Endothelial cell of umbilical vein (primary cell): ENCODE measurements at regions of chr20 and their contacts with region 1.

Region 1: DNA sequence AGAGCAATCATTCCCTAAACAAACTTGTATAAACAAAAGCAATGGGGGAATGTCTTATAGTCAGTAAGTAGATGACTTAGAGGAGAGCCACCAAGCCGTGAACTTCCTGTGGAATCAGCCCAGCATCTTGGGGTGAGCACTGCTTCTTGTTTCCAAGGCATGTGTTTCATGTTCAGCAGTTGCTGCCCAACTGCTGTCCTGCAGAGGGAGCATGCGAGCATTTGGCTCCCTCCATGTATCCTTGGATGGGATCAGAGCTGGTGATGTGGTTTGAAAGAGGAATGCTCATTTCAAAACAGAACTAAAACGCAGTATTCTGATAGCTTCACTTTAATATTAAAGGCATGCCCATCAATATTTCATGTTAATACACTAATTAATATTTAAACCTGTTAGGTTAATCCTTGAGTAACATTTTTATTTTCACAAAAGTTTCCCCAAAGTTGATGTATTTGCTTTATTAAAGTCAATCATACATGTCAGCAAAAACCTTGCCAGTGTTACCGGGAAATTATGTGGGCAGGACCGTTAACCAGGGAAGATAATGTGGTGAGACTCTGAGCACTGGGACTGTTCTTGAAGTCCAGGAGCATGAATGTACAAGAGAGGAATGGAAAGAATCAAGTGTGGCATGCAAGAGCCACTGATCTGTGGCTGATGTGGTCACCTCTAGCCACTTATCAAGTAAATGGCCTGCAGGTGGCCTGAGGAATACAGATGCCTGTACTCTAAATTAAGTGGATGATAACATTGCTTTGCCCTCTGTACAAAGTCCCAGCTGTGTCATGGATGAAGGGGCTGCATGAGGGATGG is 172.2 kb upstream of the GGTLC1 start:
- DNase-seq: peak; percentile 58
- H3K4me3 ChIP-seq: no peak overlapping the region
- H3K27ac ChIP-seq: no peak overlapping the region
- H3K4me1 ChIP-seq: peaks cover 14% of the 10 kb centered on the region
- H3K27me3 ChIP-seq: peaks cover 2 to 4% of the 10 kb centered on the region in 2 experiments
- CTCF ChIP-seq: peak; percentile 72 to 86
- POLR2A ChIP-seq: no peak

Region 2: GRCh38 chr20:23399568-23400241 is 761.1 kb before region 1 on chr20:
- CTCF ChIA-PET with region 1: no interaction called
- POLR2A ChIA-PET with region 1: no interaction called
- dilution Hi-C with region 1: no loop called
- intact Hi-C with region 1: no loop called
- DNase-seq: no peak
- H3K4me3 ChIP-seq: no peak overlapping the region
- H3K27ac ChIP-seq: no peak overlapping the region
- H3K4me1 ChIP-seq: peaks cover 17% of the 10 kb centered on the region
- H3K27me3 ChIP-seq: no peaks in the 10 kb centered on the region
- CTCF ChIP-seq: no peak
- POLR2A ChIP-seq: no peak

Region 3: GRCh38 chr20:23794841-23795240 is 365.9 kb before region 1 on chr20:
- CTCF ChIA-PET with region 1: no interaction called
- POLR2A ChIA-PET with region 1: no interaction called
- dilution Hi-C with region 1: no loop called
- intact Hi-C with region 1: loop called (anchors 5 kb)
- DNase-seq: no peak
- H3K4me3 ChIP-seq: no peak overlapping the region
- H3K27ac ChIP-seq: no peak overlapping the region
- H3K4me1 ChIP-seq: no peaks in the 10 kb centered on the region
- H3K27me3 ChIP-seq: peaks cover 3 to 5% of the 10 kb centered on the region in 2 experiments
- CTCF ChIP-seq: no peak
- POLR2A ChIP-seq: no peak

Region 4: GRCh38 chr20:23937303-23938117 is 223.3 kb before region 1 on chr20:
- CTCF ChIA-PET with region 1: interaction called, 42 read pairs
- POLR2A ChIA-PET with region 1: no interaction called
- dilution Hi-C with region 1: no loop called
- intact Hi-C with region 1: loop called (anchors 1 kb)
- DNase-seq: peak; percentile 60
- H3K4me3 ChIP-seq: no peak overlapping the region
- H3K27ac ChIP-seq: no peak overlapping the region
- H3K4me1 ChIP-seq: no peaks in the 10 kb centered on the region
- H3K27me3 ChIP-seq: no peaks in the 10 kb centered on the region
- CTCF ChIP-seq: peak; percentile 54 to 73
- POLR2A ChIP-seq: no peak

Region 5: DNA sequence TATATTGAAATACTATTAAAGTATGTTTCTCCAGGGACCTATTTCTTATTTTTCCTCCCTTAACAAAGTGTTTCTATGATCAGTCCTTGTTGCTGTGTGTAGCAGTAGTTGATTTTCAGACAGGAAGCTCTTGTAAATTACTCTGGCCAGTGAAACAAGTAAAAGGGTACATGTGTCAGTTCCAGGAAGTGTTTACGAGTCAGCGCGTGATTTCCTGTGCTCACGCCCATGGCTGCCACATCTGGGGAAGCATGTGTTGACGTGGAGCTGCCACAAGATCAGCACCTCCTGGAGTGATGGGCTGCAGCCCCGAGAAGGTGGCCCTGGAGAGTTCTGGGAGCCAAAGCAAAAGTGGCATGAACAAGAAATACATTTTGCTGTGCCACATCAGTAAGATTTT is 133.5 kb before region 1 on chr20:
- CTCF ChIA-PET with region 1: interaction called, 3 read pairs
- POLR2A ChIA-PET with region 1: no interaction called
- dilution Hi-C with region 1: no loop called
- intact Hi-C with region 1: loop called (anchors 10 kb)
- DNase-seq: peak; percentile 90
- H3K4me3 ChIP-seq: no peak overlapping the region
- H3K27ac ChIP-seq: peak overlapping the region; percentile 85
- H3K4me1 ChIP-seq: peaks cover 14% of the 10 kb centered on the region
- H3K27me3 ChIP-seq: no peaks in the 10 kb centered on the region
- CTCF ChIP-seq: no peak
- POLR2A ChIP-seq: peak; percentile 48

Region 6: DNA sequence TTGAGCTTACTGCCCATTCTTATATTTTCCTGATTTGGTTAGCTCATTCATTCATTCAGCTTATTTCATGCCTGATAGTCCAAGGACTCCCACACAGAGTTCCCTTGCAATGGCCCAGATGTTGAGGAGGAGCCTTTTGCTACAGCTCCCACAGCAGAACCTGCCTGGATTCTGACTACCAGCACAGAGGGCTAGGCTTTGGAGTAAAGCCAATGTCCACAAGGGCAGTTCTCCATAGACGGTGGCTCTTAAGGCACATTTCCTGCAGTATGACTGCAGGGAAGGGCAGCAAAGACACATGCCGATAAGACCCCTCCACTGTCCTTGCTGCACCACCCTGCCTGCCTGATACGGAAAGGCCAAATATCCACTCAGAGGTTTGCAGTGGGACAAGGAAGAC is 196.4 kb after region 1 on chr20:
- CTCF ChIA-PET with region 1: no interaction called
- POLR2A ChIA-PET with region 1: no interaction called
- dilution Hi-C with region 1: no loop called
- intact Hi-C with region 1: no loop called
- DNase-seq: no peak
- H3K4me3 ChIP-seq: no peak overlapping the region
- H3K27ac ChIP-seq: no peak overlapping the region
- H3K4me1 ChIP-seq: no peaks in the 10 kb centered on the region
- H3K27me3 ChIP-seq: no peaks in the 10 kb centered on the region
- CTCF ChIP-seq: no peak
- POLR2A ChIP-seq: no peak

Region 7: GRCh38 chr20:24608926-24609667 is 448.3 kb after region 1 on chr20:
- CTCF ChIA-PET with region 1: no interaction called
- POLR2A ChIA-PET with region 1: no interaction called
- dilution Hi-C with region 1: no loop called
- intact Hi-C with region 1: no loop called
- DNase-seq: no peak
- H3K4me3 ChIP-seq: no peak overlapping the region
- H3K27ac ChIP-seq: no peak overlapping the region
- H3K4me1 ChIP-seq: no peaks in the 10 kb centered on the region
- H3K27me3 ChIP-seq: no peaks in the 10 kb centered on the region
- CTCF ChIP-seq: no peak
- POLR2A ChIP-seq: no peak

Region 8: GRCh38 chr20:24917797-24918578 is 757.2 kb after region 1 on chr20:
- CTCF ChIA-PET with region 1: interaction called, 11 read pairs
- POLR2A ChIA-PET with region 1: no interaction called
- dilution Hi-C with region 1: no loop called
- intact Hi-C with region 1: loop called (anchors 1 kb)
- DNase-seq: peak; percentile 55
- H3K4me3 ChIP-seq: no peak overlapping the region
- H3K27ac ChIP-seq: no peak overlapping the region
- H3K4me1 ChIP-seq: no peaks in the 10 kb centered on the region
- H3K27me3 ChIP-seq: no peaks in the 10 kb centered on the region
- CTCF ChIP-seq: peak; percentile 80 to 88
- POLR2A ChIP-seq: no peak